ENCODE measurements at regions of chr17 and their contacts with region 1.

Region 1: GRCh38 chr17:68497885-68498319 is 14.3 kb upstream of the PRKAR1A start:
- DNase-seq: peak in 3 of 14 experiments; percentile 42 to 48 (median 47)
- ATAC-seq: no peak
- H3K4me3 ChIP-seq: peak overlapping the region; percentile 21
- H3K4me3 Mint-ChIP-seq: peak overlapping the region; percentile 9
- H3K27ac ChIP-seq: no peak overlapping the region
- H3K27ac Mint-ChIP-seq: peak overlapping the region; percentile 21
- H3K4me1 ChIP-seq: peaks cover 12% of the 10 kb centered on the region
- H3K4me1 Mint-ChIP-seq: peaks cover 18% of the 10 kb centered on the region
- H3K27me3 ChIP-seq: no peaks in the 10 kb centered on the region
- H3K27me3 Mint-ChIP-seq: peaks cover 7% of the 10 kb centered on the region
- CTCF ChIP-seq: no peak

Region 2: DNA sequence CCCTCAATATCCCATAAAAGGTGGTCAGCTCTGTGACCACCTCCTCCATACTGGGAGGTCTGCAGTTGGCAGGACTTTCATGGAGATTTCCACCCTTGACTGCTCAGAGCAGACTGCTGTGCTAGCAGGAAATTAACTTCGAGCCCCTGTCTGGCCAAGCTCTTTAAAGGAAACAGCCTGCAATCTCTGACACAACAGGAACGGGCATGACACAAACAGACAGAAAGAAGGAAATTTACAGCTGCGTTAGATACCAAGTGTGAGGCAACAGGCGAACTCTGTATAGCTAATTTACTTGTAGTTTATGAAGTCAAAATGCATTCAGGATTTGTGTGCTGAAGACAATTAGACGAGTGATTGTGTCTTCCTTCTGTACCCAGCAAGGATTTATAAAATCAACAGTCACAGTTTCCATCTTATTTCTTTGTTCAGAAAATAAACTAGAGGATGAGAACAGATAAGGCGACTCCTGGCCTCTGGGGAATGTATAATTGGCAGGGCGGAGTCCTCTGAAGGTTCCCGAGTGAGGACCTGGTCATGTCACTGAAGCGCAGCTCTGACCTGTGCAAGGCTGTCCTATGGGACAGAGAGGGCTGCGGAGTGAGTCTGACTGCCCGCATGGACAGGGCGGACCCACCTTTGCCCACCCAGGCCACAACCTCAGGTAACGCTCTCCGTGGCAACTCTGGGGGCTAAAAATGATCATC is 56.7 kb before region 1 on chr17:
- CTCF ChIA-PET with region 1: no interaction called
- POLR2A ChIA-PET with region 1: no interaction called
- intact Hi-C with region 1: loop called in 1 of 2 experiments (anchors 5 kb)
- DNase-seq: peak in 2 of 14 experiments; percentile 20 to 41
- ATAC-seq: no peak
- H3K4me3 ChIP-seq: no peak overlapping the region
- H3K4me3 Mint-ChIP-seq: no peak overlapping the region
- H3K27ac ChIP-seq: no peak overlapping the region
- H3K27ac Mint-ChIP-seq: peak overlapping the region; percentile 61
- H3K4me1 ChIP-seq: peaks cover 33% of the 10 kb centered on the region
- H3K4me1 Mint-ChIP-seq: peaks cover 53% of the 10 kb centered on the region
- H3K27me3 ChIP-seq: no peaks in the 10 kb centered on the region
- H3K27me3 Mint-ChIP-seq: no peaks in the 10 kb centered on the region
- CTCF ChIP-seq: no peak

Region 3: GRCh38 chr17:68512247-68512982 is 14.5 kb after region 1 on chr17 and contains the start of gene PRKAR1A:
- CTCF ChIA-PET with region 1: no interaction called
- POLR2A ChIA-PET with region 1: interaction called, 23 read pairs
- intact Hi-C with region 1: loop called in 1 of 2 experiments (anchors 2 kb)
- DNase-seq: peak; percentile 83 to 97 (median 90)
- ATAC-seq: peak; percentile 82
- H3K4me3 ChIP-seq: peak within 1 kb of the TSS; percentile 80
- H3K4me3 Mint-ChIP-seq: peak within 1 kb of the TSS; percentile 100
- H3K27ac ChIP-seq: peak within 1 kb of the TSS; percentile 98
- H3K27ac Mint-ChIP-seq: peak within 1 kb of the TSS; percentile 99
- H3K4me1 ChIP-seq: peaks cover 17% of the 10 kb centered on the region
- H3K4me1 Mint-ChIP-seq: peaks cover 50% of the 10 kb centered on the region
- H3K27me3 ChIP-seq: no peaks in the 10 kb centered on the region
- H3K27me3 Mint-ChIP-seq: no peaks in the 10 kb centered on the region
- CTCF ChIP-seq: no peak
- total RNA-seq, gene PRKAR1A: 88.8 to 89.1 TPM

Measured in CD4-positive, alpha-beta T cell (primary cell).